ENCODE measurements at regions of chr20 and their contacts with region 1.

Region 1: DNA sequence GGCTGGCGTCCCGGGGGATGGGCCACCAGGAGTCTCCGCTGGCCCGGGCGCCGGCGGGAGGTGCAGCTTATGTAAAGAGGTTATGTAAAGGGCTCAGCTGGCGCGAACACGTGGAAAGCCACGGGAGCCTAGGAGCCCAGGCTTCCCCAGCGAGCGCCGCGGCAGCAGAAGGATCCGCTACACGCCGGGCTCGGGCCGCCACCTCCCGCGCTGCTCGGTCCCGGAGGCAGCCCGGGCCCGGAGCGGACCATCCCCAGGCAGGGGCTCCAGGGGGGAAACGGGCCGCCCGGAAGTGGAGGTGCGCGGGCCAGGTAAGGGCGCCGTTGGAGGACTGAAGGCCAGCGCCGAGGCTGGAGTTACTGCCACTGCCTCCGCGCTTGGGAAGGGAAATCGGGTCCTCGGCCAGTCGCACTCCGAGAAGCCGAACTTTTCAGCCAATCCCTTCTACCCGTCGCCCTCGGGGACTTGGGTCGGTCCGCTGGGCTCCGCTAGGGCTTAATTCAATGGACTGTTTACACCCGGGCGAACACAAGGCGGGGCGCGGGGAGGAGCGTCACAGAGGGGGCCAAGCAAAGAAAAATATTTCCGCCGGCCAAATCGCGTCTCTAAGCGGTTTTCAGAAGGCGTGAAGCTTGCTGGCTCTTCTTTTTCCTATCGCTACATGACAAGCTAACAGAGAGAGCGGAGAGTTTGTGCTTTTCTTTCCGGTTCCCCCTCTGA is 398 bp downstream of the STK35 start:
- DNase-seq: peak; percentile 96
- ATAC-seq: peak; percentile 95

Region 2: GRCh38 chr20:1934721-1935573 is 167.1 kb before region 1 on chr20:
- intact Hi-C with region 1: no loop called
- DNase-seq: peak; percentile 89
- ATAC-seq: peak; percentile 81

Region 3: GRCh38 chr20:2086177-2086979 is 15.6 kb before region 1 on chr20:
- intact Hi-C with region 1: no loop called
- DNase-seq: no peak
- ATAC-seq: peak; percentile 50

Region 4: GRCh38 chr20:2140561-2140960 is 38.5 kb after region 1 on chr20:
- intact Hi-C with region 1: loop called (anchors 2 kb)
- DNase-seq: no peak
- ATAC-seq: peak; percentile 89

Region 5: DNA sequence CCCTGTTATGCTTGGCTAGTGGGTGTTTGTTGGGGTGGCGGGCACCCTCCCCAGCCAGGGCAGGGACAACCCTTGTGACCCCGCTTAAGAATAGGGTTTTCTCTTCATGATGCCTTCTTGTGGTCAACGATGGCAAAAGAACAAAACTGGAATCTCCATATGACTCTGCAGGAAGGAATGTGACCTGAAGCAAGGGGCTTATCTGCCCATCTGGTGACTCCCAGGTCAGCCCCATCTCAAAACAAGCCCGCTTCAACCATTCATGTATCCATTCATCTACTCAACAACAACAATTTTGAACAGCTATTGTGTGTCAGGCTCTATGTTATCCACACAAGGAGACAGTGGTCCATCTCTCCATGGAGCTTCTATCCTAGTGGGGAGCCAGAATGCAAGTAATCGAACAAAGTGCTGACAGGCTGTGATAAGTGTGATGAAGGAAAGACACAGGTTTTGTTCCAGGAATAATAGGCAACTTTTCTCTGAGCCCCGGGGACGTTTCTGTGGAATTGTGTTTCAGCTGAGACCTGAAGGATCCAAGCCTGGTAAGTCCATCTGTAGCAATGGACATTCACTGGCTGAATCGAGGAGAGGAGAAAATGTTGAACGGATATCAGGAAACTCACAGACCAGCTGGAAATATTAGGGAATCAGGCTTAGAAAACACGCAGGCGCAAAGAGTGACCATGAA is 247.9 kb after region 1 on chr20:
- intact Hi-C with region 1: no loop called
- DNase-seq: no peak
- ATAC-seq: no peak

Measured in Right ventricle myocardium inferior (tissue), 1 donor.